RWPE1 (cell line): ENCODE measurements at regions of chr2 and their contacts with region 1.

Region 1: DNA sequence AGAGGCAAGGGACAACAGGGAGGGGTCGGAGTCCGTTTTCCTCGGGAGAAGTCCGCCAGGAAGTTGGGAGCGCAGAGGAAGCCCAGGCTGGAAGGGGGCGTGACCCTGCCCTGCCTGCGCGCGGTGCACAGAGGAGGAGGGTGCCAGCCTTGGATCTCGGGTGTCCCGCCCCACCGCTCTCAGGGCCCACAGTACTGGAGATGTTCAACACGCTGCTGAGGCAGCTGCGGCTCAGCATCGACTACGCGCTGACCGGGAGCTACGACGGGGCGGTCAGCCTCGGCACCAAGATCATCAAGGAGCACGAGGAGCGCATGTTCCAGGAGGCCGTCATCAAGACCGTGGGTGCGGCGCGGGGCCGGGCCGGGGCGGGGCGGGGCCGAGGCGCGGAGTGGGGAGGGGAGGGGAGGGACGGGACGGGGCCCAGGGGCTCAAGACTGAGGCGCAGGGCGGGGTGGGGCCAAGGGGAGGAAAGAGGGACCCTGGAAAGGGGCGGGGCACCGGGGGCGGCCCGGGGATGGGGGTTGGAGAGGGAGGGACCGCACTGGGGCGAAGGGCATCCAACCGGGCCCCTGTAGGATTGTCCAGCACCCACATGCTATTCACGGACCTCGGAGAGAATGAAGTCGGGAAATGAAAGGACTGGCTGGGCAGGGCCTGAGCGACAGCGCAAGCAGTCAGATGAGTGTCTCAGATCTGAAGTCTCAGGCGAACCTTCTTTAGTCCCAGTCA is 36.6 kb downstream of the POMC start:
- DNase-seq: no peak
- H3K27ac ChIP-seq: no peak overlapping the region
- CTCF ChIP-seq: no peak

Region 2: GRCh38 chr2:24971536-24972314 is 160.0 kb before region 1 on chr2 and contains the start of gene DNAJC27:
- CTCF ChIA-PET with region 1: interaction called, 27 read pairs
- POLR2A ChIA-PET with region 1: no interaction called
- DNase-seq: peak; percentile 99
- H3K27ac ChIP-seq: peak within 1 kb of the TSS; percentile 94
- CTCF ChIP-seq: no peak

Region 3: GRCh38 chr2:25032094-25032493 is 99.6 kb before region 1 on chr2:
- CTCF ChIA-PET with region 1: no interaction called
- POLR2A ChIA-PET with region 1: no interaction called
- DNase-seq: no peak
- H3K27ac ChIP-seq: no peak overlapping the region
- CTCF ChIP-seq: no peak